ENCODE measurements at regions of chr13 and their contacts with region 1.

Region 1: GRCh38 chr13:56271686-56272085 is 869.0 kb upstream of the PRR20A start:
- DNase-seq: no peak
- ATAC-seq: no peak
- H3K4me3 ChIP-seq: no peak overlapping the region
- H3K27ac ChIP-seq: no peak overlapping the region
- H3K4me1 ChIP-seq: no peaks in the 10 kb centered on the region
- H3K27me3 ChIP-seq: no peaks in the 10 kb centered on the region
- CTCF ChIP-seq: no peak
- POLR2A ChIP-seq: no peak
- RAD21 ChIP-seq: no peak

Region 2: DNA sequence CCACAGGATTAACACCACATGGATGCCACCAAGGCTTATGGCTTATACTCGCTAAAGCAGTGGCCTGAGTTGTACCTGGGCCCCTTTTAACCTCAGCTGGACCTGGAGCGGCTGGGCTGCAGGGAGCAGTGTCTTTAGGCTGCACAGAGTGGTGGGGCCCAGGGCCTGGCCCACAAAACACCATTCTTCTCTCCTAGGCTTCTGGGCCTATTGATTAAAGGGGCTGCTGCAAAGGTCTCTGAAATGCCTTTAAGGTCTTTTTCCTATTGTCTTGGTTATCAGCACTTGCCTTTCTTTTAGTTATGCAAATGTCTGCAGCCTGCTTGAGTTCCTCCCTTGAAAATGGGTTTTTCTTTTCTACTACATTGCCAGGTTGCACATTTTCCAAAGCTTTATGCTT is 104.8 kb before region 1 on chr13:
- CTCF ChIA-PET with region 1: no interaction called
- POLR2A ChIA-PET with region 1: no interaction called
- dilution Hi-C with region 1: no loop called
- in situ Hi-C with region 1: loop called (anchors 25 kb)
- intact Hi-C with region 1: no loop called
- DNase-seq: no peak
- ATAC-seq: no peak
- H3K4me3 ChIP-seq: no peak overlapping the region
- H3K27ac ChIP-seq: no peak overlapping the region
- H3K4me1 ChIP-seq: no peaks in the 10 kb centered on the region
- H3K27me3 ChIP-seq: no peaks in the 10 kb centered on the region
- CTCF ChIP-seq: no peak
- POLR2A ChIP-seq: no peak
- RAD21 ChIP-seq: no peak

Region 3: DNA sequence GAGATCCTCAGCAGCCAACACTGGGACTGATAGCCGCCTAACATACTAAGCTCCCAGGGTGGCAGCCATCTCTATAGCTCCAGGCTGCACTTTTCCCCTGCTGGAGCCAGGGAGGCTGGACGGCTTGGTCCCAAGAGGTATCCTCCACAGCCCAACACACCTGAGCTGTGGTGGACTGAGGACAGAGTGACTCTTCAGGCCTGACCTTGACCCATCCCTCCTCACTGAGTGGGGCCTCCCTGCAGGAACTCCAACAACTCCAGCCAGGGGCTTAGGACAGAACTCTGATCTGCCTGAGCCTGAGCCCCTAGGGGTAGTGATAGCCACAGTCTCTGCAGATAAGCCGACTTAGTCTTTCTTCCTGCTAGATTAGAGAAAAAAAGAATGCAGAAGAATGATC is 89.1 kb before region 1 on chr13:
- CTCF ChIA-PET with region 1: no interaction called
- POLR2A ChIA-PET with region 1: no interaction called
- dilution Hi-C with region 1: no loop called
- in situ Hi-C with region 1: no loop called
- intact Hi-C with region 1: no loop called
- DNase-seq: no peak
- ATAC-seq: no peak
- H3K4me3 ChIP-seq: no peak overlapping the region
- H3K27ac ChIP-seq: no peak overlapping the region
- H3K4me1 ChIP-seq: no peaks in the 10 kb centered on the region
- H3K27me3 ChIP-seq: no peaks in the 10 kb centered on the region
- CTCF ChIP-seq: no peak
- POLR2A ChIP-seq: no peak
- RAD21 ChIP-seq: no peak

Region 4: DNA sequence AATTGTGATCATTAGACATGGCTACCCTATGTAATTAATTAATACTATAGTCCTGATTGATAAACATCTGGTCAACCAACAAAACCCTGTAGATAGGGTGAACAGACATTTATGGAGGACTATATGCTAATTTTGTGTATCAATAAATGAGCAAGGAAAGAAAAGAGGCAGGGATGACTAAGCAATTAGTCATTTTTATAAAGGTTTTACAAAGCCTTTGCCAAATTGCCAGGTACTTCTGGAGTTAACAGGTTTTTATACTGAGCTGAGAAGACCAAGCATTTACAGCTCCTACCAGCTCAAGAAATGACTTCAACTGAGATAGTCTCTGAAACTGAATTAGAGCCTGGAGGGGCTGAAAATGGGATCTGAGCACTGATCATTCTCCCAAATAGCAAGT is 682.3 kb after region 1 on chr13:
- CTCF ChIA-PET with region 1: no interaction called
- POLR2A ChIA-PET with region 1: no interaction called
- dilution Hi-C with region 1: no loop called
- in situ Hi-C with region 1: no loop called
- intact Hi-C with region 1: no loop called
- DNase-seq: no peak
- ATAC-seq: no peak
- H3K4me3 ChIP-seq: no peak overlapping the region
- H3K27ac ChIP-seq: no peak overlapping the region
- H3K4me1 ChIP-seq: no peaks in the 10 kb centered on the region
- H3K27me3 ChIP-seq: no peaks in the 10 kb centered on the region
- CTCF ChIP-seq: no peak
- POLR2A ChIP-seq: no peak
- RAD21 ChIP-seq: no peak